ENCODE measurements at regions of chr1 and their contacts with region 1.

Region 1: GRCh38 chr1:52904927-52905698 is 16.4 kb downstream of the ECHDC2 start:
- DNase-seq: no peak
- ATAC-seq: peak; percentile 93
- H3K4me3 ChIP-seq: no peak overlapping the region
- H3K27ac ChIP-seq: no peak overlapping the region
- H3K4me1 ChIP-seq: peaks cover 18% of the 10 kb centered on the region
- H3K27me3 ChIP-seq: no peaks in the 10 kb centered on the region
- CTCF ChIP-seq: peak; percentile 70
- EP300 ChIP-seq: no peak
- POLR2A ChIP-seq: no peak
- RAD21 ChIP-seq: peak; percentile 65

Region 2: DNA sequence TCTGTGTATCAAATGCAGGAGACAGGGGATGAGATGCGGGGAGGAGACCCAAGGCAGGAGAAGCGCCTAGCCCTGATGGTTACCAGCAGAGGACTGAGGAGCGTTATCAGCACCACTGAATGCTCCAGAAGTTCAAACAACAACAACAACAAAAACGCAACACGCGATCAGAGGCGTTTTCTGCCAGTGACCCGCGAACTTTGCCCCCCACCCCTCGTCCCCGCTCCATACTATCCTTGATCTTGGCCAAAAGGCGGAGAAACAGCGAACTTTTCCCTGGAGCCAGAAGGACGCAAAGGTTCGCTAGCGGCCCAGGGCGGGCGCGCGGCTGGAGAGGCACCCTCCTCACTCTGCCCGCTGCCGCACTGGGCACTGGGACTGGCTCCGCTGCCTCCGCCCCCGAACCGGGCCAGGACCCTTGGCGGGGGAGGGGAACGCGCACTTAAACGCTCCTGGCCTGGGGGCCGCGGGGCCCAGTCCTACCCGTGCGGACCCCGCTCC is 15.7 kb after region 1 on chr1:
- CTCF ChIA-PET with region 1: no interaction called
- POLR2A ChIA-PET with region 1: interaction called, 3 read pairs
- in situ Hi-C with region 1: no loop called
- intact Hi-C with region 1: loop called (anchors 1 kb)
- DNase-seq: no peak
- ATAC-seq: peak; percentile 80
- H3K4me3 ChIP-seq: peak overlapping the region; percentile 64 to 86 (median 74)
- H3K27ac ChIP-seq: peak overlapping the region; percentile 91
- H3K4me1 ChIP-seq: peaks cover 73% of the 10 kb centered on the region
- H3K27me3 ChIP-seq: no peaks in the 10 kb centered on the region
- CTCF ChIP-seq: no peak
- EP300 ChIP-seq: no peak
- POLR2A ChIP-seq: no peak
- RAD21 ChIP-seq: no peak

Region 3: GRCh38 chr1:52970149-52970548 is 65.0 kb after region 1 on chr1:
- CTCF ChIA-PET with region 1: interaction called, 12 read pairs
- POLR2A ChIA-PET with region 1: no interaction called
- in situ Hi-C with region 1: no loop called
- intact Hi-C with region 1: loop called (anchors 1 kb)
- DNase-seq: peak; percentile 44
- ATAC-seq: peak; percentile 75
- H3K4me3 ChIP-seq: no peak overlapping the region
- H3K27ac ChIP-seq: no peak overlapping the region
- H3K4me1 ChIP-seq: 0 out of 2 replicates have a peak, but pooled peaks cover 4% of the 10 kb centered on the region
- H3K27me3 ChIP-seq: no peaks in the 10 kb centered on the region
- CTCF ChIP-seq: peak; percentile 59
- EP300 ChIP-seq: no peak
- POLR2A ChIP-seq: no peak
- RAD21 ChIP-seq: 0 out of 2 replicates have a peak, but pooled peaks have one; percentile 40